Transverse colon (tissue), 4 donors: ENCODE measurements at regions of chr18 and their contacts with region 1.

Region 1: GRCh38 chr18:70966419-70966818 is 677.6 kb downstream of the SOCS6 start:
- DNase-seq: no peak
- H3K4me3 ChIP-seq: no peak overlapping the region
- H3K27ac ChIP-seq: no peak overlapping the region
- H3K4me1 ChIP-seq: no peaks in the 10 kb centered on the region
- H3K27me3 ChIP-seq: no peaks in the 10 kb centered on the region
- CTCF ChIP-seq: no peak
- EP300 ChIP-seq: no peak
- POLR2A ChIP-seq: no peak

Region 2: GRCh38 chr18:71028285-71028762 is 61.9 kb after region 1 on chr18:
- in situ Hi-C with region 1: no loop called
- intact Hi-C with region 1: loop called (anchors 10 kb)
- DNase-seq: no peak
- H3K4me3 ChIP-seq: no peak overlapping the region
- H3K27ac ChIP-seq: no peak overlapping the region
- H3K4me1 ChIP-seq: no peaks in the 10 kb centered on the region
- H3K27me3 ChIP-seq: no peaks in the 10 kb centered on the region
- CTCF ChIP-seq: no peak
- EP300 ChIP-seq: no peak
- POLR2A ChIP-seq: no peak